ENCODE measurements at regions of chr15 and their contacts with region 1.

Region 1: DNA sequence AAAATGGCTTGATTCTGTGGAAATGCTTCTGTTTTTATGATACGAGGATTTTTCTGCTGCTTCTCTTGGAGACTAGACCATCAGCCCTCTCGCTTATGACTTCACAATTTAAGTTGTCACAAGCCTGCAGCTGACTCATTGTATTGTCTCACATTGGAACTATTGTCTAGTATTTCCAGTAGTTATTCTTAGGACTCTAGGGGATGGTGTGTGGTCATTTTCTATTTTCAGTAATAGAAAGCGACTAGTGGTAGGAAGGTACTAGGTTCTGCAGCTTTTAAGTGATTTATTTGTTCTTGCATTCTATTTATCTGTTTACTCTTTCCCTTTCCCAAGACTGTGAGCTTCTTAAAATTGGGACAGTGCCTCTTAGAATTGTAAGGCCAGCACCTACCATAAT is 66.3 kb upstream of the CRTC3 start:
- DNase-seq: peak; percentile 33
- H3K4me3 ChIP-seq: no peak overlapping the region
- CTCF ChIP-seq: no peak

Region 2: GRCh38 chr15:90362936-90363212 is 100.5 kb before region 1 on chr15:
- CTCF ChIA-PET with region 1: interaction called, 20 read pairs
- POLR2A ChIA-PET with region 1: no interaction called
- DNase-seq: peak; percentile 71
- H3K4me3 ChIP-seq: no peak overlapping the region
- CTCF ChIP-seq: no peak

Measured in AG04449 (cell line).